Natural killer cell (primary cell): ENCODE measurements at regions of chr19 and their contacts with region 1.

Region 1: DNA sequence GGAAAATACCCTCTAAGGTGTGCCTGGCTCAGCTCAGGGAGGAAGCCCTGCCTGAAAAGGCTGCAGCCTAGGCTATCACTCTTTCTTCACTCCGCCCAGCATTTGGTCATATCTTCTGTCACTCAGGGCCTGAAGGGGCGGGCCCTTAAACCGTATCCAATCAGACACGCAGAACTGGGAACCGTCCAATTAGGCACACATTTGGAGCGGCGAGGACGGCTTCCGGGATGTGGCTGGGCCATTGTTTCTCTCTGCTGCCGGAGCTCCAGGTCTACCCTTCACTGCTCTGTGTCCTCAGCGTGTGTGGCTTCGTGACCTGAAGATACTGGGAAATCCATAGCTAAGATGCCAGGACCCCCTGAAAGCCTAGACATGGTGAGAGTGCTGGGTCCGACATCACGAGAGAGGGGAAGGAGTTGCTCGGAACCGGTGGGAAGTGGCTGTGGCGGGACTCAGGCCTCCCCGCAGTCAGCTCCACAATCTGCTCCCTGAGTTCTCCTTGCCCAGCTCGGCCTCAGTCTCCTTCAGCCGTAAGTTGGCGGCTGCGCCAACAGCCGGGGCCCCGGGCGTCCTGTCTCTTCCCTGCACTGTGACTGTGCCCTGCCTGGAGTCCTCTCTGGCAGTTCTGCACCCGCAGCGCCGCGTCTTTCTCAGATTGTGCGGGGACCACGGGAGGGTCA is at the start of gene ZNF493:
- DNase-seq: peak; percentile 90 to 95
- ATAC-seq: peak; percentile 99 to 100 (median 99)
- H3K4me3 ChIP-seq: peak within 1 kb of the TSS; percentile 87
- H3K4me3 Mint-ChIP-seq: peak within 1 kb of the TSS; percentile 97
- H3K27ac ChIP-seq: peak within 1 kb of the TSS; percentile 78
- H3K27ac Mint-ChIP-seq: peak within 1 kb of the TSS; percentile 92 to 95
- H3K4me1 ChIP-seq: peaks cover 4% of the 10 kb centered on the region
- H3K4me1 Mint-ChIP-seq: peaks cover 29 to 43% of the 10 kb centered on the region in 2 donors
- H3K27me3 ChIP-seq: no peaks in the 10 kb centered on the region
- H3K27me3 Mint-ChIP-seq: no peaks in the 10 kb centered on the region
- CTCF ChIP-seq: no peak
- total RNA-seq, gene ZNF493: 48.1 to 57.0 (median 50.4) TPM

Region 2: GRCh38 chr19:20565321-20566018 is 831.6 kb before region 1 on chr19 and contains the start of gene ZNF737:
- intact Hi-C with region 1: loop called (anchors 2 kb)
- DNase-seq: peak; percentile 90 to 97
- ATAC-seq: peak; percentile 90 to 95 (median 92)
- H3K4me3 ChIP-seq: peak within 1 kb of the TSS; percentile 78
- H3K4me3 Mint-ChIP-seq: peak within 1 kb of the TSS; percentile 100
- H3K27ac ChIP-seq: peak within 1 kb of the TSS; percentile 84
- H3K27ac Mint-ChIP-seq: peak within 1 kb of the TSS; percentile 99 to 100
- H3K4me1 ChIP-seq: peaks cover 11% of the 10 kb centered on the region
- H3K4me1 Mint-ChIP-seq: peaks cover 31 to 36% of the 10 kb centered on the region in 2 donors
- H3K27me3 ChIP-seq: no peaks in the 10 kb centered on the region
- H3K27me3 Mint-ChIP-seq: no peaks in the 10 kb centered on the region
- CTCF ChIP-seq: no peak
- total RNA-seq, gene ZNF737: 10.1 to 16.5 (median 13.7) TPM

Region 3: DNA sequence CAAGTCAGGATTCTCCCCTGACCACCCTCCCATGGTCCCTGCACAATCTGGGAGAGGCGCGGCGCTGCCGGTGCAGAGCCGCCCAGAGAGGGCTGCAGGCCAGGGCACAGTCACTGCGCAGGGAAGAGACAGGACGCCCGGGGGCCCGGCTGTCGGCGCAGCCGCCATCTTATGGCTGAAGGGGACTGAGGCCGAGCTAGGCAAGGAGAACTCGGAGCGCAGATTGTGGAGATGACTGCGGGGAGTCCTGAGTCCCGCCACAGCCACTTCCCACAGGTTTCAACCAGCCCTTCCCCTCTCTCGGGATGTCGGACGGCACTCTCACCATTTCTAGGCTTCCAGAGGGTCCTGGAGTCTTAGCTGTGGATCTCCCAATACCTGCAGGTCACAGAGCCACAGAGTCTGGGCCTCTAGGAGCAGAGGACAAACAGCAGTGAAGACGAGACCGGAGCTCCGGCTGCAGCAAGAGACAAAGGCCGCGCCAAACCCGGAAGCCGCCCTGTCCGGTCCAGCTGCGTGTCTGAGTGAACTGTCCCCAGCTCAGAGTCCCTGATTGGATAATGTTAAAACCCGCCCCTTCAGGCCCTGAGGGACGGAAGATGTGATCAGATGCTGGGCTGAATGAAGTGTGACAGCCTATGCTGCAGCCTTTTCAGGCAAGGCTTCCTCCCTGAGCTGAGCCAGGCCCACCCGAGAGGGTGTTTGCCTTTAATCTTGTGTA is 68.0 kb before region 1 on chr19 and contains the start of gene ZNF708:
- intact Hi-C with region 1: loop called (anchors 2 kb)
- DNase-seq: peak; percentile 73 to 86
- ATAC-seq: peak; percentile 97 to 100 (median 98)
- H3K4me3 ChIP-seq: peak within 1 kb of the TSS; percentile 96
- H3K4me3 Mint-ChIP-seq: peak within 1 kb of the TSS; percentile 97
- H3K27ac ChIP-seq: peak within 1 kb of the TSS; percentile 97
- H3K27ac Mint-ChIP-seq: peak within 1 kb of the TSS; percentile 98
- H3K4me1 ChIP-seq: peaks cover 15% of the 10 kb centered on the region
- H3K4me1 Mint-ChIP-seq: peaks cover 34 to 38% of the 10 kb centered on the region in 2 donors
- H3K27me3 ChIP-seq: no peaks in the 10 kb centered on the region
- H3K27me3 Mint-ChIP-seq: no peaks in the 10 kb centered on the region
- CTCF ChIP-seq: no peak
- total RNA-seq, gene ZNF708: 21.2 to 24.4 (median 24.4) TPM

Region 4: DNA sequence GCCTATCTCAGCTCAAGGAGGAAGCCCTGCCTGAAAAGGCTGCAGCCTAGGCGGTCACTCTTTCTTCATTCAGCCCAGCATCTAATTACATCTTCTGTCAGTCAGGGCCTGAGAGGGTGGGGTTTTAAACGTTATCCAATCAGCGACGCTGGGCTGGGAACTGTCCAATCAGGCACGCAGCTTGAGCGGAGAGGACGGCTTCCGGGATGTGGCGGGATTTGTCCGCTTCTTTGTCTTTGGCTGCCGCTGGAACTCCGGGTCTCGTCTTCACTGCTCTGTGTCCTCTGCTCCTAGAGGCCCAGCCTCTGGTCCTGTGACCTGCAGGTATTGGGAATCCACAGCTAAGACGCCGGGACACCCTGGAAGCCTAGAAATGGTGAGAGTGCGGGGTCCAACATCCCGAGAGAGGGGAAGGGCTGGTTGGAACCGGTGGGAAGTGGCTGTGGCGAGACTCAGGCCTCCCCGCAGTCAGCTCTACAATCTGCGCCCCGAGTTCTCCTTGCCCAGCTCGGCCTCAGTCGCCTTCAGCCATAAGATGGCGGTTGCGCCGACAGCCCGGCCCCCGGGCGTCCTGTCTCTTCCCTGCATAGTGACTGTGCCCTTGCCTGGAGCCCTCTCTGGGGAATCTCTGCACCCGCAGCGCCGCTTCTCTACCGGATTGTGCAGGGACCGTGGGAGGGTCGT is 38.1 kb before region 1 on chr19 and contains the start of gene ZNF738:
- intact Hi-C with region 1: loop called (anchors 2 kb)
- DNase-seq: peak; percentile 85 to 91
- ATAC-seq: peak; percentile 97 to 98 (median 98)
- H3K4me3 ChIP-seq: peak within 1 kb of the TSS; percentile 85
- H3K4me3 Mint-ChIP-seq: peak within 1 kb of the TSS; percentile 99
- H3K27ac ChIP-seq: peak within 1 kb of the TSS; percentile 83
- H3K27ac Mint-ChIP-seq: peak within 1 kb of the TSS; percentile 94 to 96
- H3K4me1 ChIP-seq: peaks cover 7% of the 10 kb centered on the region
- H3K4me1 Mint-ChIP-seq: peaks cover 18% of the 10 kb centered on the region in 2 donors
- H3K27me3 ChIP-seq: no peaks in the 10 kb centered on the region
- H3K27me3 Mint-ChIP-seq: no peaks in the 10 kb centered on the region
- CTCF ChIP-seq: no peak
- total RNA-seq, gene ZNF738: 11.4 to 22.9 (median 14.7) TPM

Region 5: GRCh38 chr19:21410166-21410565 is 13.1 kb after region 1 on chr19:
- intact Hi-C with region 1: no loop called
- DNase-seq: no peak
- ATAC-seq: no peak
- H3K4me3 ChIP-seq: no peak overlapping the region
- H3K4me3 Mint-ChIP-seq: no peak overlapping the region
- H3K27ac ChIP-seq: no peak overlapping the region
- H3K27ac Mint-ChIP-seq: no peak overlapping the region
- H3K4me1 ChIP-seq: no peaks in the 10 kb centered on the region
- H3K4me1 Mint-ChIP-seq: no peaks in the 10 kb centered on the region
- H3K27me3 ChIP-seq: no peaks in the 10 kb centered on the region
- H3K27me3 Mint-ChIP-seq: no peaks in the 10 kb centered on the region
- CTCF ChIP-seq: no peak

Region 6: GRCh38 chr19:21568816-21569493 is 171.9 kb after region 1 on chr19:
- intact Hi-C with region 1: loop called (anchors 1 kb)
- DNase-seq: peak; percentile 72 to 96
- ATAC-seq: peak; percentile 96 to 99 (median 97)
- H3K4me3 ChIP-seq: peak overlapping the region; percentile 39
- H3K4me3 Mint-ChIP-seq: peak overlapping the region; percentile 100
- H3K27ac ChIP-seq: peak overlapping the region; percentile 46
- H3K27ac Mint-ChIP-seq: peak overlapping the region; percentile 93 to 100
- H3K4me1 ChIP-seq: peaks cover 7% of the 10 kb centered on the region
- H3K4me1 Mint-ChIP-seq: peaks cover 4 to 33% of the 10 kb centered on the region in 2 donors
- H3K27me3 ChIP-seq: no peaks in the 10 kb centered on the region
- H3K27me3 Mint-ChIP-seq: no peaks in the 10 kb centered on the region
- CTCF ChIP-seq: no peak